A549 (cell line): ENCODE measurements at regions of chr3 and their contacts with region 1.

Region 1: GRCh38 chr3:11662402-11662990 is 18.8 kb upstream of the VGLL4 start:
- DNase-seq: peak; percentile 24 to 28
- ATAC-seq: peak in 1 of 2 experiments; percentile 76; a peak in 3 of 6 replicates
- H3K4me3 ChIP-seq: no peak overlapping the region
- H3K27ac ChIP-seq: no peak overlapping the region
- H3K4me1 ChIP-seq: peaks cover 19% of the 10 kb centered on the region
- CTCF ChIP-seq: peak; percentile 34; the same call in 1 of the 3 replicates
- EP300 ChIP-seq: no peak
- POLR2A ChIP-seq: no peak
- RAD21 ChIP-seq: peak in 1 of 2 experiments; percentile 35; a peak in 2 of 5 replicates

Region 2: GRCh38 chr3:11651900-11652299 is 10.6 kb before region 1 on chr3:
- CTCF ChIA-PET with region 1: interaction called, 20 read pairs
- POLR2A ChIA-PET with region 1: no interaction called
- DNase-seq: peak in 1 of 2 experiments; percentile 44
- ATAC-seq: no peak
- H3K4me3 ChIP-seq: no peak overlapping the region
- H3K27ac ChIP-seq: no peak overlapping the region
- H3K4me1 ChIP-seq: no peaks in the 10 kb centered on the region
- CTCF ChIP-seq: peak; percentile 73
- EP300 ChIP-seq: no peak
- POLR2A ChIP-seq: no peak
- RAD21 ChIP-seq: peak; percentile 75 to 79

Region 3: DNA sequence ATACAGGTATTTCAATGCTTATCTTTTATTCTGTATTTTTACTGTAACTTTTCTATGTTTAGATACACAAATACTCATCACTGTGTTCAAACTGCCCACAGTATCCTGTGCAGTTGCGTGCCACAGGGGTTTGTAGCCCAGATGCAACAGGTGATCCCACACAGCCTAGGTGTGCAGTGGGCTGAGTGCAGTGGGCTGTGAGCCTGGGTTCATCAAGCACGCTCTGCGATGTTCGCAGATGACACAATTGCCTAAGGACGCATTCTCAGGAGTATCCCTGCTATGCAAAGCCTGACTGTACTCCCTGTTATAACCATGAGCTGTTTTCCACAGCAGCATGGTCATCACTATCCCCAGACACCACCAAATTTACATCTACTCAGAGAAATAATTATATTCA is 17.5 kb after region 1 on chr3:
- CTCF ChIA-PET with region 1: interaction called, 11 read pairs
- POLR2A ChIA-PET with region 1: no interaction called
- DNase-seq: no peak
- ATAC-seq: no peak; a peak in 1 of 6 replicates
- H3K4me3 ChIP-seq: no peak overlapping the region
- H3K27ac ChIP-seq: no peak overlapping the region
- H3K4me1 ChIP-seq: peaks cover 13% of the 10 kb centered on the region; the same call in 2 of the 3 replicates
- CTCF ChIP-seq: no peak
- EP300 ChIP-seq: no peak
- POLR2A ChIP-seq: no peak
- RAD21 ChIP-seq: no peak